Brain microvascular endothelial cell (primary cell): ENCODE measurements at regions of chr9 and their contacts with region 1.

Region 1: GRCh38 chr9:70413798-70414775 is at the start of gene KLF9:
- DNase-seq: peak; percentile 97
- H3K4me3 ChIP-seq: peak within 1 kb of the TSS; percentile 96
- H3K27ac ChIP-seq: peak within 1 kb of the TSS; percentile 98
- H3K27me3 ChIP-seq: no peaks in the 10 kb centered on the region
- CTCF ChIP-seq: no peak

Region 2: DNA sequence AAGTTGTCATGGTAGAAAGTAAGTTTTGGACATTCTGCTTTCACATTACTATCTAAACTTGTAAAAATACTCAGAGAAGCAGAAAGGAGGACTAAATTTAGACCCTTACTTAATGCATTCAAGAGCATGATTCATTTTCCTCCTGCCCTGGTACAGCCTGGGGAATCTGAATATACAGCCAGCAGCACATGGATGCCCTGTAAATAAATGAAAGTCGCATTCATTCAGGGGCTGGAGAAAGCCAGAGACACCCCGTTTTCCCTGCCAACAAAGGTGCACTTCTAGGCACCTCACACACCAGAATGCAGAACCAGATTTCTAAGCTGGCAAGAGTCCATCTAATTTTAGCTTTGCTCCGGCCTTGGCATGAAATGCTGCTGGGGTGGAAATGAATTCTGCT is 173.1 kb after region 1 on chr9:
- in situ Hi-C with region 1: loop called (anchors 25 kb)
- DNase-seq: peak; percentile 75
- H3K4me3 ChIP-seq: no peak overlapping the region
- H3K27ac ChIP-seq: peak overlapping the region; percentile 72
- H3K27me3 ChIP-seq: no peaks in the 10 kb centered on the region
- CTCF ChIP-seq: no peak

Region 3: DNA sequence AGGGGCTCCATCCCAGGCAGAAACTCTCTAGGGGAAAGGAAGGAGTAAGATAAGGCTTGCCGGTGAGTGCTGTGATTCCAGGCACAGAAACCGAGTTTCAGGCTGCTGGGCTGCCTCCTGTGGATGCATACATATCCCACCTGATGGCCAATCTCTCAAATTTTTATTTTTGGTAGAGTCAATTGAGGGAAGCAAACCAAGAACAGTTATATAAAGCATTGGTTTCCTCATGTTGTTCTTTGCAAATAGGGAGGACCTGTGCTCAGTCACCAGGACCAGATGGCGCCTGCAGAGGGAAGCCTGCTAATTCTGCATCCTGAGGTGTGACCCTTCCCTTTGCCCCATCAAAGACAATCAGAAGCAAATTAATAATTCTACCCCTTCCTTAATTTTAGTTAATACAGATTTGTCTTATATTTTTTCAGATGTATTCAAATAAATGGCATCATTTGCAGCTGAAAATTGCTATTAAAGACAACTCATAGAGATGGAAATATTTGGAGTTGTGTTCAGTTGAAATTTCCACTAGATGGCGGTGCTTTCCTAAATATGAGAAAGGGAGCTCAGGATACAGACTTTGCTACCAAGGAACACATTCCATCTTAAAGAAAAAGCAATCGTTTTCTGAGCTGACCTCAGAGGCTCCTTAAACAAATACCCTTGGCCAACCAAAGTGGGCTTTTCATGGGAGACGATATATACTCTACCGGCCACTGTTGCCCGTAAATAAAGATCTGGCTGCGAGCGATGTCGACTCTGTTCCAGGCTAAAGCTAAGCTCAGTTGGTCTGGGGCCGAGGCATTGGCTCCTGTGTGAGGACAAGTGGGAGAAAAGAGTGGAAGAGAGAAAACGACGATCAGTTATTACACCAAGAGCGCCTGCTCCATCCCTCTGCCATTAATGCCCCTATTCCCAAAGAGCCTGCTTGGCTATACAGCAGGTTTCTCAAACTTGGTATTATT is 226.0 kb after region 1 on chr9:
- in situ Hi-C with region 1: no loop called
- DNase-seq: peak; percentile 44
- H3K4me3 ChIP-seq: no peak overlapping the region
- H3K27ac ChIP-seq: no peak overlapping the region
- H3K27me3 ChIP-seq: no peaks in the 10 kb centered on the region
- CTCF ChIP-seq: peak; percentile 58